Activated CD4-positive, alpha-beta T cell treated with anti-CD3 and anti-CD28 coated beads, Interleukin-2, amount 10 ng/mL, durations not matched to agents 7 days and 5 days (primary cell): ENCODE measurements at regions of chr15 and their contacts with region 1.

Region 1: GRCh38 chr15:41465822-41466421 is 27.8 kb upstream of the ITPKA start:
- DNase-seq: peak; percentile 50
- H3K4me3 Mint-ChIP-seq: no peak overlapping the region
- H3K27ac Mint-ChIP-seq: no peak overlapping the region
- H3K4me1 Mint-ChIP-seq: peaks cover 5% of the 10 kb centered on the region
- H3K27me3 Mint-ChIP-seq: no peaks in the 10 kb centered on the region

Region 2: DNA sequence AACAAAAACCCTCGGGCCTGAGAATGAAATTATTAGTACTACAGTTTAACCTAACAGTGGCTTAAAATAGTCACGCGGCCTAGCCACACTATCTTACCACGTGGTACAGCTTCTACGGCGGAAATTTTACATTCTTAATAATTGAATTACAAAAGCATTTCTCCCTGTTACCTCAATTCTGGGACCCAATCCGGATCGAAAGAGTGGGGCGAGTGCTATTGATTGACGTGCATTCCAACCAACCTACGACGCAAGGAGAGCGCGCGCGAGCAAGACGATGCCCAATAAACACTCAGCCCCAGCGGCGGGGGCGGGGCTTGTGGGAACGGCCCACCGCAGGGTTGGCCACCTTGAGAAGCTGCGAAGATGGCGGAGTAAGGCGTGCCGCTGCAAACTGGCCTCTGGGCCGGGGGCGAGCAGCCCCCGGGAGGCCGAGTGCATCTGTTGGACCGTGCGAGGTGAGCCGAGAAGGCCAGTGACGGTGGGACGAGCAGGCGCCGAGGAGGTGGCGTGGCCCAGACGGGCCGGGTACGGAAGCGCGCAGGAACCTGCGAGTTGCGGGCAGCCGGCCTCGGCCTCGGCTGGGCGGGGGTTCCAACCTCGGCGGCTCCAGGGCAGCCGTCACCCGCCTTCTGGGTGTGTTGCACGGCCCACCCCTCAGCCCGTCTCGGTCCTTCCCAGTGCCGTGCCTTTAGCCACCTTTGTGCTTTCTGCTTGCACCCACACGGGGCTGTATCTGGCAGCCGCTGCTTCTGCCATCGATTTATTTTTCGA is 182.1 kb before region 1 on chr15:
- CTCF ChIA-PET with region 1: no interaction called
- POLR2A ChIA-PET with region 1: no interaction called
- DNase-seq: peak; percentile 98
- H3K4me3 Mint-ChIP-seq: peak overlapping the region; percentile 93
- H3K27ac Mint-ChIP-seq: peak overlapping the region; percentile 94
- H3K4me1 Mint-ChIP-seq: peaks cover 44% of the 10 kb centered on the region
- H3K27me3 Mint-ChIP-seq: no peaks in the 10 kb centered on the region

Region 3: DNA sequence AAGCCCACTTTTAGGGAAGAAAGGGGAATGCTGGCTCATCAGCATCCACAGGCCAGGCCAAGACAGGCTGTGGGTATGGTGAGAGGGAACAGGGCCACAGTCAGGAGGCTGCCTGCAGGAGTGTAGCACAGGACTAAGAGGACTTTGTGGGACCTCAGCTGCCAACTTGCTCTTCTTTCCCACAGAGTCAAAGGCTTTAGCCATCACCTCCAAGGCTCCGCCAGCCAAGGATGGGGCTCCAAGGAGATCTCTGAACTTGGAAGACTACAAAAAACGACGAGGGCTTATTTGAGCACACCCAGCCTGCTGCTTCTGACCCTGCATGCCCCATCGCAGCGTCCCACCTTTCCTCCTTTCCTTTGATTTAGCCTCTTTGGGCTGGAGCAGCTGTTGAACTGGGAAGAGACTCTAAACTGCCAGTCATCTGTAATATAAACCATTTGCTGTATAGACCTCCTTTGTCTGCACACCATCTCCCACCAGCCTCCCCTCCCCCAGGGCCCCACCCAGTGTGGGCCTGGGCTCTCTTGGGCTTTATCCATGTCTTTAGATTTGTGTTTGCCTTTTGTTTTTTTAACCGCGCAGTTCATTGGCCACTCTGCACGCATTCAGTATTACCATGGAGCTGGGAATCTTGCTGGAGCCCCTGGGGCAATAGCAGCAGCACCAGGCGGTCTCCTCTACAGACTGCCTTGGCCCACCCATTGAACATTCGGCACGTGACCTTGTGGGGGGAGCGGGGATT is 14.6 kb after region 1 on chr15:
- CTCF ChIA-PET with region 1: interaction called, 14 read pairs
- POLR2A ChIA-PET with region 1: no interaction called
- DNase-seq: no peak
- H3K4me3 Mint-ChIP-seq: no peak overlapping the region
- H3K27ac Mint-ChIP-seq: no peak overlapping the region
- H3K4me1 Mint-ChIP-seq: peaks cover 17% of the 10 kb centered on the region
- H3K27me3 Mint-ChIP-seq: no peaks in the 10 kb centered on the region

Region 4: GRCh38 chr15:41621200-41622193 is 155.6 kb after region 1 on chr15:
- CTCF ChIA-PET with region 1: no interaction called
- POLR2A ChIA-PET with region 1: no interaction called
- DNase-seq: peak; percentile 79
- H3K4me3 Mint-ChIP-seq: peak overlapping the region; percentile 73
- H3K27ac Mint-ChIP-seq: peak overlapping the region; percentile 84
- H3K4me1 Mint-ChIP-seq: peaks cover 23% of the 10 kb centered on the region
- H3K27me3 Mint-ChIP-seq: peaks cover 11% of the 10 kb centered on the region

Region 5: DNA sequence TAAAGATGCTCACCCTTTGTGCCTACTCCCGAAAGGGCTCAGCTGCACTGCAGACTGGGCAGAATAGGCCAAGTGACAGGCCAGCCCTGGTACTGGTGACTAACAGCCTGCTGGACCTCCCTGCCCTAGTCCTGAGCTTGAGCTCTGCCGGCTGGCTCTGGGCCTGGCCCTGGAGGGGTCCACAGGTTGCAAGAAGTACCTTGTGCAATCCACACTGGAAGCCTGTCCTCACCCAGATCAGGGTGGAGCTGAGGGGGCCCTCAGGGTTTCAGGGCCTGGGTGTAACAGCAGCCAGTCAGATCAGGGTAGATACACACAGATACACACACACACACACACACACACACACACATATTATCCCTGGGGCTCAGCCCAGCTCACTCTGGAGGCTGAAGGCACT is 655.8 kb after region 1 on chr15:
- CTCF ChIA-PET with region 1: no interaction called
- POLR2A ChIA-PET with region 1: no interaction called
- DNase-seq: no peak
- H3K4me3 Mint-ChIP-seq: no peak overlapping the region
- H3K27ac Mint-ChIP-seq: no peak overlapping the region
- H3K4me1 Mint-ChIP-seq: peaks cover 5% of the 10 kb centered on the region
- H3K27me3 Mint-ChIP-seq: peaks cover 17% of the 10 kb centered on the region